ENCODE measurements at regions of chr15 and their contacts with region 1.

Region 1: GRCh38 chr15:98442379-98442833 is 205.9 kb upstream of the IGF1R start:
- DNase-seq: no peak
- H3K4me3 ChIP-seq: no peak overlapping the region
- H3K27ac ChIP-seq: no peak overlapping the region
- H3K4me1 ChIP-seq: peaks cover 0 to 14% (median 7%) of the 10 kb centered on the region in 3 donors
- H3K27me3 ChIP-seq: peaks cover 0 to 23% (median 0%) of the 10 kb centered on the region in 4 donors
- CTCF ChIP-seq: peak in 5 of 6 experiments; percentile 72 to 86 (median 81)
- POLR2A ChIP-seq: no peak

Region 2: DNA sequence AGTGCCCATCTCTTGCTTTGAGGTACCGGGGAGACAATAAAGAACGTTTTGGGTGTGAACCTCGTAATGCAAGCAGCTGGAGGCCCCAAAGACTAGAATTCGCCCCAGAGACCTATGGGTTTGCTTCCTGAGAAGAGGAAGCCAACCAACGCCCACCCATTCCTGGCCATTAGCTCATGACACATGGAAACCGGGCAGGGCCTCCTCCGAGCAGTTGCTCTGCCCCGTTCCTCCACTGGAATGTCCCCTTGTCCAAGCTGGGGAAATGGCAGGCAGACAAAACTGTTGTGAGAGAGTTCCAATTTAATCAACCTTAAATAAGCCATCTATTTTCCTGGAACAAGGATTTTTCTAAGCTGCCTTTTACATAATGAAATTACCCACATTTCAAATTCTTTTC is 45.0 kb before region 1 on chr15:
- intact Hi-C with region 1: no loop called
- DNase-seq: no peak
- H3K4me3 ChIP-seq: no peak overlapping the region
- H3K27ac ChIP-seq: no peak overlapping the region
- H3K4me1 ChIP-seq: no peaks in the 10 kb centered on the region
- H3K27me3 ChIP-seq: peaks cover 0 to 9% (median 0%) of the 10 kb centered on the region in 4 donors
- CTCF ChIP-seq: no peak
- POLR2A ChIP-seq: no peak

Region 3: DNA sequence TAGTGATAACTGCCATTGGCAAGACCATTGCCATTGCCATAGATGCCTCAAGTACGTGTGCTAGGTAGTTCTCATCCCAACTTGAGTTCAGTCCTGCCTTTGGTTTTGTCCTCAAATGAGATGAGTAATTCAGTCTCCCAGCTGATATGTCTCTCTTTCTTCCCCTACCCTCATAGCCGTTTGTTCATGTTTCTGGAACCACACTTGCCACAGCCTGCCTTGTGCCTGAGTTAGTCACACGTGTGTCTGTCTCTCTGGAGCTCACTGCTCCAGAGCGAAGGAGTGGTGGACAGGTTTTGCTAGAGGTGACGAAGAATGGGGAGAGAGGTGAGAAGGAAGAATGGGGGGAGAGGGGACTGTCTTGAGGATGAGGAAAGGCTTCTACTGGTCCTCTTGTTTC is 117.9 kb after region 1 on chr15:
- intact Hi-C with region 1: no loop called
- DNase-seq: no peak
- H3K4me3 ChIP-seq: no peak overlapping the region
- H3K27ac ChIP-seq: peak overlapping the region in 2 of 4 donors; percentile 6 to 23
- H3K4me1 ChIP-seq: peaks cover 5 to 28% (median 5%) of the 10 kb centered on the region in 3 donors
- H3K27me3 ChIP-seq: no peaks in the 10 kb centered on the region
- CTCF ChIP-seq: no peak
- POLR2A ChIP-seq: no peak

Region 4: GRCh38 chr15:98635848-98636247 is 193.4 kb after region 1 on chr15:
- intact Hi-C with region 1: loop called (anchors 10 kb)
- DNase-seq: no peak
- H3K4me3 ChIP-seq: no peak overlapping the region
- H3K27ac ChIP-seq: no peak overlapping the region
- H3K4me1 ChIP-seq: no peaks in the 10 kb centered on the region
- H3K27me3 ChIP-seq: peaks cover 0 to 42% (median 0%) of the 10 kb centered on the region in 4 donors
- CTCF ChIP-seq: no peak
- POLR2A ChIP-seq: no peak

Region 5: GRCh38 chr15:98684436-98684835 is 242.0 kb after region 1 on chr15:
- intact Hi-C with region 1: no loop called
- DNase-seq: no peak
- H3K4me3 ChIP-seq: no peak overlapping the region
- H3K27ac ChIP-seq: peak overlapping the region in 3 of 4 donors; percentile 11 to 82 (median 81)
- H3K4me1 ChIP-seq: peaks cover 12 to 74% (median 35%) of the 10 kb centered on the region in 3 donors
- H3K27me3 ChIP-seq: no peaks in the 10 kb centered on the region
- CTCF ChIP-seq: no peak
- POLR2A ChIP-seq: no peak

Measured in esophagus squamous epithelium (tissue), 5 donors.